WTC11 (cell line): ENCODE measurements at regions of chr16 and their contacts with region 1.

Region 1: GRCh38 chr16:3059000-3059722 is 6.3 kb upstream of the IL32 start:
- DNase-seq: peak; percentile 94
- ATAC-seq: peak; percentile 79
- H3K4me3 Mint-ChIP-seq: peak overlapping the region; percentile 76
- H3K27ac Mint-ChIP-seq: peak overlapping the region; percentile 79; the same call in 1 of the 2 replicates
- H3K4me1 Mint-ChIP-seq: peaks cover 28% of the 10 kb centered on the region
- H3K27me3 Mint-ChIP-seq: peaks cover 3% of the 10 kb centered on the region; the same call in 1 of the 2 replicates
- CTCF ChIP-seq: peak; percentile 92

Region 2: GRCh38 chr16:3023669-3024478 is 35.3 kb before region 1 on chr16 and contains the starts of genes HCFC1R1 and THOC6:
- CTCF ChIA-PET with region 1: interaction called, 109 read pairs
- POLR2A ChIA-PET with region 1: interaction called, 8 read pairs
- DNase-seq: peak; percentile 98
- ATAC-seq: peak; percentile 47
- H3K4me3 Mint-ChIP-seq: peak within 1 kb of the TSS; percentile 86
- H3K27ac Mint-ChIP-seq: peak within 1 kb of the TSS; percentile 99
- H3K4me1 Mint-ChIP-seq: peaks cover 37% of the 10 kb centered on the region
- H3K27me3 Mint-ChIP-seq: peaks cover 2% of the 10 kb centered on the region; the same call in 1 of the 2 replicates
- CTCF ChIP-seq: no peak
- total RNA-seq, gene HCFC1R1: 76.0 to 84.0 TPM (median 83.2 TPM) in 3 replicates
- total RNA-seq, gene THOC6: 76.5 to 94.2 TPM (median 88.7 TPM) in 3 replicates

Region 3: GRCh38 chr16:3045357-3045728 is 13.8 kb before region 1 on chr16:
- CTCF ChIA-PET with region 1: interaction called, 59 read pairs
- POLR2A ChIA-PET with region 1: interaction called, 8 read pairs
- DNase-seq: peak; percentile 60
- ATAC-seq: peak; percentile 18
- H3K4me3 Mint-ChIP-seq: peak overlapping the region; percentile 89
- H3K27ac Mint-ChIP-seq: peak overlapping the region; percentile 74
- H3K4me1 Mint-ChIP-seq: peaks cover 13% of the 10 kb centered on the region
- H3K27me3 Mint-ChIP-seq: peaks cover 26% of the 10 kb centered on the region
- CTCF ChIP-seq: no peak

Region 4: DNA sequence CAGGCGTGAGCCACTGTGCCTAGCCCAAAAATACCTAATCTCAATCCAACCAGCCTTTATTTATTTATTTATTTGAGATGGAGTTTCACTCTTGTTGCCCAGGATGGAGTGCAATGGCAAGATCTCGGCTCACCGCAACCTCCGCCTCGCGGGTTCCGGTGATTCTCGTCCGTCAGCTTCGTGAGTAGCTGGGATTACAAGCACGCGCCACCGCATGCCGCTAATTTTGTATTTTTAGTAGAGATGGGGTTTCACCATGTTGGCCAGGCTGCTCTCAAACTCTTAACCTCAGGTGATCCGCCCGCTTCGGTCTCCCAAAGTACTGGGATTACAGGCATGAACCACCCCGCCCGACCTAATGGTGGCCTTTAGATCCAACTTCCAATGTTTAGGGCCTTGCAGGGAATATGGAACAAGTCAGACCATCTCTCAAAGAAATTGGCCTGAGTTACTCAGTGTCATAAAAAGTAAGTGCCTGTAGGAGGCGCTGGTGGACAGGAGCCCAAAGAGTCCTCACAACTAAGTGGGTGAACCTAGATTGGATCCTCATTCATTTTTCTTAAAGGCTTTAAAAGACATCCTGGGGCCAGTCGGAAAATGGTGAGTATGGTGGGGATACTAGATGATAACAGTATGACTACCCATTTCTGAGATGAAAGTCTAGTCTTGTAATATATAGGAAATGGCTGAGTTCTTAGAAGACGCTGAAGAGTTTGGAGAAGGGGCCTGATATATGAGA is 35.3 kb after region 1 on chr16:
- CTCF ChIA-PET with region 1: interaction called, 64 read pairs
- POLR2A ChIA-PET with region 1: interaction called, 29 read pairs
- DNase-seq: peak; percentile 62
- ATAC-seq: no peak
- H3K4me3 Mint-ChIP-seq: peak overlapping the region; percentile 37
- H3K27ac Mint-ChIP-seq: peak overlapping the region; percentile 96
- H3K4me1 Mint-ChIP-seq: peaks cover 42% of the 10 kb centered on the region
- H3K27me3 Mint-ChIP-seq: no peaks in the 10 kb centered on the region
- CTCF ChIP-seq: peak; percentile 68; the same call in 1 of the 2 replicates

Region 5: GRCh38 chr16:3112058-3112880 is 53.1 kb after region 1 on chr16 and contains the start of gene ZNF205:
- CTCF ChIA-PET with region 1: interaction called, 38 read pairs
- POLR2A ChIA-PET with region 1: no interaction called
- DNase-seq: peak; percentile 88
- ATAC-seq: peak; percentile 94
- H3K4me3 Mint-ChIP-seq: peak within 1 kb of the TSS; percentile 88
- H3K27ac Mint-ChIP-seq: peak within 1 kb of the TSS; percentile 94
- H3K4me1 Mint-ChIP-seq: peaks cover 27% of the 10 kb centered on the region
- H3K27me3 Mint-ChIP-seq: no peaks in the 10 kb centered on the region
- CTCF ChIP-seq: no peak
- total RNA-seq, gene ZNF205: 17.7 to 22.7 TPM (median 21.3 TPM) in 3 replicates

Region 6: GRCh38 chr16:3134564-3135417 is 75.6 kb after region 1 on chr16 and contains the start of gene ZNF213:
- CTCF ChIA-PET with region 1: interaction called, 79 read pairs
- POLR2A ChIA-PET with region 1: interaction called, 6 read pairs
- DNase-seq: peak; percentile 94
- ATAC-seq: peak; percentile 94
- H3K4me3 Mint-ChIP-seq: peak within 1 kb of the TSS; percentile 98
- H3K27ac Mint-ChIP-seq: peak within 1 kb of the TSS; percentile 99
- H3K4me1 Mint-ChIP-seq: peaks cover 17% of the 10 kb centered on the region
- H3K27me3 Mint-ChIP-seq: no peaks in the 10 kb centered on the region
- CTCF ChIP-seq: no peak
- total RNA-seq, gene ZNF213: 8.9 to 11.6 TPM (median 10.3 TPM) in 3 replicates

Region 7: DNA sequence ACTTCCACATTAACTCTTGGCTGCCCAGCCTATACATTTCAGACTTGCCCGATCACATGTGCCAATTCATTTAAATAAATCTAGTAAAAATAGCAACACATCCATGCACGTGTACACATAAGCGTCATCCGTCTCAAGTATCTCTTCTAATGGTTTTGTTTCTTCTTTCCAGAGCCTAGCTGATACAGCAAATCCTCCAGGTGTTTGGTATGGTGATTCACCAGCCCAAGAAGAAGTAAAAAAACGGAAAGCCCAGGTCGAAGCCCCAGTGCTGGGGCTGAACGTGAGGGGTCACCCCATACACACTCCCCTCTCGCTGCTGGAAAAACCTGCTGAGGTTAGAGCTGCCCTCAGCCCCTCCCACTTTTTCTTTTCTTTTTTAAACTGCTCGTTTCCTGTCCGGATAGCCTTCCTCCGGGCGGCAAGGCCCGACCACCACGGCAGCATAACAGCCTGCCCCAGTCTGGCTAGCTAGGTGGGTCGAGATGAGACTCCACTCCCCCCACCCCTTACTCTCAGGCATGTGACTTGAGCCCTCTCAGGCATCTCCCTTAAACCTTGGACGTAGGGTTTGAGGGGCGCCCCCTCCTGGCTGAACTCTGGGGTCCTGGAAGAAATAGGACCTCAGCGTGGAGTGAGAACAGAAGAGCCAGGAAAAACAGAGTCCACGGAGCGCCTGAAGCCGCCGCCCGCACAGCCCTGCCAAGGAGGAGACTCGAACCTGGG is 114.9 kb after region 1 on chr16:
- CTCF ChIA-PET with region 1: interaction called, 18 read pairs
- POLR2A ChIA-PET with region 1: no interaction called
- DNase-seq: peak; percentile 92
- ATAC-seq: peak; percentile 34
- H3K4me3 Mint-ChIP-seq: peak overlapping the region; percentile 75
- H3K27ac Mint-ChIP-seq: peak overlapping the region; percentile 85
- H3K4me1 Mint-ChIP-seq: peaks cover 25% of the 10 kb centered on the region
- H3K27me3 Mint-ChIP-seq: peaks cover 57% of the 10 kb centered on the region
- CTCF ChIP-seq: peak; percentile 62; the same call in 1 of the 2 replicates